Activated CD4-positive, alpha-beta T cell treated with anti-CD3 and anti-CD28 coated beads for 36 hours (primary cell): ENCODE measurements at regions of chr19 and their contacts with region 1.

Region 1: GRCh38 chr19:43784981-43785808 is 4.4 kb upstream of the KCNN4 start:
- DNase-seq: peak; percentile 76
- ATAC-seq: peak; percentile 11
- H3K4me3 Mint-ChIP-seq: peak overlapping the region; percentile 57
- H3K27ac Mint-ChIP-seq: peak overlapping the region; percentile 81
- H3K4me1 Mint-ChIP-seq: peaks cover 39% of the 10 kb centered on the region
- H3K27me3 Mint-ChIP-seq: peaks cover 7% of the 10 kb centered on the region

Region 2: DNA sequence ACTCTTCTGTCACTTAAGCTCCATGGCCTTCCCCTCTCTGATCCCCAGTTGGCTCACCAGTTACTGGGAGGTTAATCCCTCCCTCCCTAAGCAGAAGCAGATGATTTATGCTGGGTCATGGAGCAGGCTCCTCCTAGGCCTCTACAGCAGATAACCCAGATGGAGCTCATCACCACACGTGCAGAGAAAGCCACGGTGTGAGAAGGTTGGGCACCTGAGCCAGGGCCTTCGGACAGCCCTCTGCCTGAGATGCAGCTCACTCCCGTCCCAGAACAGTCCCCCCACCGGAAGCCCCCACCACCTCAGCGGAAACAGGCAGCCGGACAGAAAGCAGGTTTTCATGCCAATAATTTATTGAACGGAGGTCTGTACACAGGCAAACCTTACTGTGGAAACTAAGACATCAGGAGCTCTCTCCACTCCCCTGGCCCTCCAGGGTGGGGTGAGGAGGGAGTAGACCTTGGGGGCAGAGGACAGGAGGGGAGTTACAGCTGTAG is 1555.3 kb before region 1 on chr19:
- CTCF ChIA-PET with region 1: no interaction called
- POLR2A ChIA-PET with region 1: no interaction called
- intact Hi-C with region 1: no loop called
- DNase-seq: no peak
- ATAC-seq: no peak
- H3K4me3 Mint-ChIP-seq: no peak overlapping the region
- H3K27ac Mint-ChIP-seq: peak overlapping the region; percentile 75
- H3K4me1 Mint-ChIP-seq: peaks cover 19% of the 10 kb centered on the region
- H3K27me3 Mint-ChIP-seq: no peaks in the 10 kb centered on the region

Region 3: DNA sequence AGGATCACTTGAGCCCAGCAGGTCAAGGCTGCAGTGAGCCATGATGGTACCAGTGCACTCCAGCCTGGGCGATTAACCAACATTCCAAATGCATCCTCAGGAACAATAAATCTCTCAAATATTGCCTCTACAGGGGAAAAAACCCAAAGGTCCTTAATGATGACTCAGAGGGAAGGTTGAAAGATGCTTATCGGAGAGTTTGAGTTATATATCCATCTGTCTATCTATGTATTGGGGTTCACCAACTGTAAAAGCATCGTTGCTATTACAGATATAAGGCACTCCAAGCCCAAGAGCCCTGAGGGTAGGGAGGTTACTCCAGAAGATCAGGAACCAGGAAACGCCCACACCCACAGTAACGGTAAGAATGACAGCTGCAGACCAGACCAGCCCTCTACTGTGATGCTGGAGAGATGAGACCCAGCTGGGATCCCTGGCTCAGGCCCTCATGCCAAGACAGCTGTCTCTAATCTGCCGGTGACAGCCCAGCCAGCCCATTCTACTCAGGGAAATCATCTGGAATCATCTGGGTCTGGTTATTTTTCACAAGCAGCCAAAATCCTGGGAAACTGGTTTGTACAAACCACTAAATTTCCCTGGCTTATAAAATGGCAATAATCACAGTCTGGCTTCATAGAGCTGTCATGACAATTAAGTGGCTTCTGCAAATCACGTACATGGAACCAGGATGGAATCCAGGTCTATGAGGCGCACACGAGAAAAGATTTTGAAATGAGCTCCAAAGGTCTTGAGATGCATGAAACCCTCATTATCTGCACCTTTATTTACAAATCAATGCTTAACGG is 346.7 kb before region 1 on chr19:
- CTCF ChIA-PET with region 1: no interaction called
- POLR2A ChIA-PET with region 1: no interaction called
- intact Hi-C with region 1: loop called in 1 of 2 experiments (anchors 10 kb)
- DNase-seq: peak; percentile 49
- ATAC-seq: no peak
- H3K4me3 Mint-ChIP-seq: no peak overlapping the region
- H3K27ac Mint-ChIP-seq: peak overlapping the region; percentile 78
- H3K4me1 Mint-ChIP-seq: peaks cover 40% of the 10 kb centered on the region
- H3K27me3 Mint-ChIP-seq: no peaks in the 10 kb centered on the region

Region 4: GRCh38 chr19:43526884-43527859 is 258.0 kb before region 1 on chr19 and contains the start of gene ETHE1:
- CTCF ChIA-PET with region 1: no interaction called
- POLR2A ChIA-PET with region 1: interaction called, 8 read pairs
- intact Hi-C with region 1: loop called (anchors 5 to 10 kb)
- DNase-seq: peak; percentile 87
- ATAC-seq: peak; percentile 70
- H3K4me3 Mint-ChIP-seq: peak within 1 kb of the TSS; percentile 92
- H3K27ac Mint-ChIP-seq: peak within 1 kb of the TSS; percentile 94
- H3K4me1 Mint-ChIP-seq: peaks cover 22% of the 10 kb centered on the region
- H3K27me3 Mint-ChIP-seq: no peaks in the 10 kb centered on the region
- total RNA-seq, gene ETHE1: 68.7 to 78.8 TPM

Region 5: GRCh38 chr19:43700395-43701000 is 84.7 kb before region 1 on chr19:
- CTCF ChIA-PET with region 1: no interaction called
- POLR2A ChIA-PET with region 1: no interaction called
- intact Hi-C with region 1: loop called (anchors 1 to 2 kb)
- DNase-seq: peak; percentile 47
- ATAC-seq: peak; percentile 26
- H3K4me3 Mint-ChIP-seq: peak overlapping the region; percentile 69
- H3K27ac Mint-ChIP-seq: peak overlapping the region; percentile 99
- H3K4me1 Mint-ChIP-seq: peaks cover 21% of the 10 kb centered on the region
- H3K27me3 Mint-ChIP-seq: peaks cover 18% of the 10 kb centered on the region

Region 6: GRCh38 chr19:43743022-43743421 is 42.2 kb before region 1 on chr19:
- CTCF ChIA-PET with region 1: interaction called, 32 read pairs
- POLR2A ChIA-PET with region 1: no interaction called
- intact Hi-C with region 1: loop called (anchors 1 kb)
- DNase-seq: no peak
- ATAC-seq: no peak
- H3K4me3 Mint-ChIP-seq: no peak overlapping the region
- H3K27ac Mint-ChIP-seq: no peak overlapping the region
- H3K4me1 Mint-ChIP-seq: peaks cover 9% of the 10 kb centered on the region
- H3K27me3 Mint-ChIP-seq: no peaks in the 10 kb centered on the region

Region 7: DNA sequence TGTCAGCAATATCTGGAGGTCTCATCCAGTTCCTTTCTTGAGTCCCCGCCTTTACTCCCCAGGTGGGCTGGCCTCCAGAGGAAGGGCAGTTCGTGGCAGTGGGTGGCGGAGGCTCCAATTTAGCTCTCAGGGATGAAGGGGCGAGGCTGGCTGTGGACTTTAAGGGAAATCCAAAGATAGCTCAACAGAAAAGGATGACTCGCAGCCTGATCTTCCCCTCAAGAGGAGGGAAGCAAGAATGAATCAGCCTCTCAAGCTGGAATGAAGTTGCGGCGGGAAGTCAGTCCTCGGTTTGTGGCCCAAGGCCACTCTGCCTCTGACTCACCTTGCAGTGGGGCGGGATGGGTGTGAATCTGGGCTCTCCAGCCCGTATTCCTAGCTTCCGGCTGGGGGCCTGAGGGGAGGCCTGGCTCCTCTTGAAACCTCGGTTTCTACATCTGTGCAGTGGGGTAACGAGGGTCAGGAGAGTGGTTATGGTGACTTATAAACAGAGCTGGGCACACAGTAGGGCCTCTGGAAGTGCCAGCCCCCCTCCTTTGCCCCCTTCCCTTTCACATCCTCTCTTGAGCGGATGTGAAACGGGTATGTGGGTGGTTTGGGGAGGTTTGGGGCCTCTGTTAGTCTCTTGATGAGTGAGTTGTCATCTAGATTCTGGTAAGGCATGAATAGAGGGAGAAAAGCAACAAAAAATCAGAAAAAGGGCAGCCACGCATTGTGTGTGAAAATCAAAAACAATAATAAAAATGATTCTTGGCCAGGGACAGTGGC is 19.9 kb before region 1 on chr19:
- CTCF ChIA-PET with region 1: interaction called, 23 read pairs
- POLR2A ChIA-PET with region 1: interaction called, 11 read pairs
- intact Hi-C with region 1: loop called (anchors 1 kb)
- DNase-seq: peak; percentile 92
- ATAC-seq: peak; percentile 81
- H3K4me3 Mint-ChIP-seq: peak overlapping the region; percentile 47
- H3K27ac Mint-ChIP-seq: peak overlapping the region; percentile 97
- H3K4me1 Mint-ChIP-seq: peaks cover 71% of the 10 kb centered on the region
- H3K27me3 Mint-ChIP-seq: no peaks in the 10 kb centered on the region

Region 8: GRCh38 chr19:43809762-43810696 is 24.8 kb after region 1 on chr19:
- CTCF ChIA-PET with region 1: interaction called, 4 read pairs
- POLR2A ChIA-PET with region 1: no interaction called
- intact Hi-C with region 1: loop called in 1 of 2 experiments (anchors 2 kb)
- DNase-seq: no peak
- ATAC-seq: peak; percentile 83
- H3K4me3 Mint-ChIP-seq: no peak overlapping the region
- H3K27ac Mint-ChIP-seq: no peak overlapping the region
- H3K4me1 Mint-ChIP-seq: no peaks in the 10 kb centered on the region
- H3K27me3 Mint-ChIP-seq: peaks cover 8% of the 10 kb centered on the region

Region 9: DNA sequence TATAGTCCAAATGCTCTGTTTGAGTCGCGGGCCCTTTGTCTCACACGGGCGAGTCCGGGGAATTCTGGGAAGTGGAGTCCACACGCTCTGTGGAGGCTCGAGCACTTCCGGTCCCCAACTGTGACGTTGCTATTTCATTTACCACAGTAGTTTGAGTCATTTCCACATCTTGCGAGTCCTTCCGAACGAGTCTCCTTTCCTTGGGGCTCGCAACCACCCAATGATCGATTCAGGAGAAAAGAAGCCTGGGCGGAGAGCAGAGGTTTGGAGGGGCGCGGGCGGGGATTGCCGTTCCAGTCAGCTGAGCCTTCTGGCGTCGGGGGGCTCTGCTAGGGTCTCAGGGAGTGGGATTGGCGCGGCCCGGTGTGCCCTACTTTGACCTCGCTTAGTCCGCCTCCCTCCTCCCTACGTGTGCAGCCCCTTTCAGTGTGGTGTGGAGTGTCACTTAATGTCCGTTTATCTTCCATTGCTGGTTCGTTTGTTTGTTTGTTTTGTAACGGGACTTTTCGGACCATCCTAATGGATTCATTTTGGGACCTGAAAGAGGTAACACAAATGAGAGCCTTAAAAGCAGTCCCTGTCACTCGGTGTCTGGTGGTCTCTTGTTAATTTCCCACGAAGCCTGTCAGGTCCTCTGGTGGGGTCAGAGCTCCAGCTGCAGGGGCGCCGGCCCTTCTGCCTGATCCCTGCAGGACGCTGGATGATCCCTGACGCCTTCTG is 240.2 kb after region 1 on chr19 and contains the start of gene ZNF222:
- CTCF ChIA-PET with region 1: no interaction called
- POLR2A ChIA-PET with region 1: no interaction called
- intact Hi-C with region 1: no loop called
- DNase-seq: peak; percentile 90
- ATAC-seq: peak; percentile 99
- H3K4me3 Mint-ChIP-seq: peak within 1 kb of the TSS; percentile 94
- H3K27ac Mint-ChIP-seq: peak within 1 kb of the TSS; percentile 93
- H3K4me1 Mint-ChIP-seq: peaks cover 20% of the 10 kb centered on the region
- H3K27me3 Mint-ChIP-seq: peaks cover 2% of the 10 kb centered on the region
- total RNA-seq, gene ZNF222: 1.5 to 2.9 TPM